Gastrocnemius medialis (tissue), 4 donors: ENCODE measurements at regions of chr4 and their contacts with region 1.

Region 1: DNA sequence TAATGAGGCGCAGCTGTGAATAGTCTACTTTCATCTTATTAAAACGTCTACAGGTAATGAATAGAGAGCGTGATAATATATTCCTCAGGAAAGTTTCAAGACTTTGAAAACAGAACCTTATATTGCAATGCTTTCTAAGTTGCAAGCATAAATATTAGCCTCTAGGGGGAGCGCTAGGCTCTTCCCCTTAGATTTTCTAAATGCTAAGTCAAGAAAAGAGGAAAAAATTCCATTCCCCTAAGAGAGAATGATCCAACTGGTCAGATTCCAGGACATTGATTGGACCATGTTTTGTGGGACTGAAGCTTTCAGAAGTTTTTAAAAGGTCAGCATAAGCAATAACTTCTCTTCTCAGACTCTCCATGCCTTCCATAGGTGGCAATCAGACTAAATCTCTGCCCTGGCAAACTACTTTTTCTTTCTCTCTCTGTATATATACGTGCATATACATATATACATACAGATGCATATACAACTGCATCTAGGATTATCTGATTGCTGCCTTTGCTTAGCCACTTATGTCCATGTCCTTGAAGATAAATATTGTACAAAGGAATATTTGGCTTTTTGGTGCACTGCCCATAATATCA is 492.9 kb downstream of the INPP4B start:
- DNase-seq: no peak
- ATAC-seq: peak; percentile 38 to 69
- H3K4me3 ChIP-seq: peak overlapping the region in 3 of 4 donors; percentile 2 to 23 (median 4)
- H3K27ac ChIP-seq: peak overlapping the region; percentile 45 to 75 (median 60)
- H3K4me1 ChIP-seq: peaks cover 36 to 65% of the 10 kb centered on the region in 2 donors
- H3K27me3 ChIP-seq: no peaks in the 10 kb centered on the region
- CTCF ChIP-seq: peak; percentile 66 to 91 (median 76)
- POLR2A ChIP-seq: no peak

Region 2: GRCh38 chr4:142405021-142405694 is 51.9 kb after region 1 on chr4:
- in situ Hi-C with region 1: no loop called
- intact Hi-C with region 1: loop called (anchors 2 kb)
- DNase-seq: peak; percentile 38 to 54
- ATAC-seq: peak; percentile 72 to 81
- H3K4me3 ChIP-seq: peak overlapping the region; percentile 57 to 61 (median 60)
- H3K27ac ChIP-seq: peak overlapping the region; percentile 82 to 91 (median 86)
- H3K4me1 ChIP-seq: peaks cover 20 to 48% of the 10 kb centered on the region in 2 donors
- H3K27me3 ChIP-seq: no peaks in the 10 kb centered on the region
- CTCF ChIP-seq: no peak
- POLR2A ChIP-seq: peak in 1 of 2 donors; percentile 56

Region 3: DNA sequence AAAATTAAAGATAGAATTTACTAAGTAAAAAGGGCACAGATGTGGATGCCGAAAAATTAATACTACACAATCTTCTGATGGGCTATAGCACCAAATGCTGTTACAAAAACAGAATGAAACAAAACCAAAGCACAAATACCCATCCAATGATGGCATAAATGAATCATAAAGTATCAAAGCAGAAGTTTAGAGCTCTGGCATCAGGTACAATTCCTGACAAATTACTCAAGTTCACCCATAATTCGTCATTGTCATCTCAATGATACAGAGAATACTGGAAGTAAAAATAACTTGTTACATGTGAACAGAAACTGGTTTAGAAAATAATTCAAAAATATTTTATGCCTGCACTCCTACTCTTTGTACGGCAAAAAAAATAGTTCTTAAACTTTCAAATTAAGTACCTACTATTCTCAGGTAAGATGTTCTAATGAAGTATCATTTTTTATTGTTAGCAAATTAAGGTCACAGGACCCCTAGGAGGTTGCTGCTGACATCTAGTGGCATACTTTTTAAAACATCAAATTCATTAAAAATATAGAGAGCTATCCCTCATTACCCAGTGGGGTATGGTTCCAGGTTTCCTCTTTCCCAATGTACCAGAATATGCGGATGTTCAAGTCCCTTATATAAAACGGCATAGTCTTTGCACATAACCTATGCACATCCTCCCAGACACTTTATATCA is 366.8 kb after region 1 on chr4:
- in situ Hi-C with region 1: loop called in 2 of 4 experiments (anchors 25 kb)
- intact Hi-C with region 1: no loop called
- DNase-seq: no peak
- ATAC-seq: no peak
- H3K4me3 ChIP-seq: no peak overlapping the region
- H3K27ac ChIP-seq: no peak overlapping the region
- H3K4me1 ChIP-seq: no peaks in the 10 kb centered on the region
- H3K27me3 ChIP-seq: no peaks in the 10 kb centered on the region
- CTCF ChIP-seq: peak in 3 of 5 experiments; percentile 30 to 51 (median 36)
- POLR2A ChIP-seq: no peak

Region 4: DNA sequence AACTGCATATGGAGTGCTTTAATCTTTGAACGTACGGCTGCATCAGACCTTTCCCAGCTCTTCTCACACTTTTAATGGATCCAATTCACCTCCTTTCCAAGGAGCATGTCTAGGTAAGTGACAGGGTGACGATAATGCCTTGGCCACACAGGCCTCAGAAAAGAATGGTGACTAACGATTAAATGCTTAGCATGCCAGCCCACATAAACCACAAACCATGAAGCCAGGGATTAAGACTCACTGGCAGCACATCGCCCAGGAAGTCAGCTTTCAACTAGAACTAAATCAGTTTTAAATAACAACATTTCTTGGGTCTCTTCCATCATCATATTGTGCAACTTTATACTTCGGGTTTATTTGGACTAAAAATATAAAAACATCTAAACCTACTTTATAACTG is 464.2 kb after region 1 on chr4:
- in situ Hi-C with region 1: no loop called
- intact Hi-C with region 1: loop called (anchors 10 kb)
- DNase-seq: peak; percentile 22 to 28
- ATAC-seq: peak; percentile 94 to 98
- H3K4me3 ChIP-seq: peak overlapping the region in 1 of 4 donors; percentile 4
- H3K27ac ChIP-seq: peak overlapping the region in 2 of 4 donors; percentile 2 to 19
- H3K4me1 ChIP-seq: peaks cover 12 to 13% of the 10 kb centered on the region in 2 donors
- H3K27me3 ChIP-seq: no peaks in the 10 kb centered on the region
- CTCF ChIP-seq: no peak
- POLR2A ChIP-seq: no peak

Region 5: DNA sequence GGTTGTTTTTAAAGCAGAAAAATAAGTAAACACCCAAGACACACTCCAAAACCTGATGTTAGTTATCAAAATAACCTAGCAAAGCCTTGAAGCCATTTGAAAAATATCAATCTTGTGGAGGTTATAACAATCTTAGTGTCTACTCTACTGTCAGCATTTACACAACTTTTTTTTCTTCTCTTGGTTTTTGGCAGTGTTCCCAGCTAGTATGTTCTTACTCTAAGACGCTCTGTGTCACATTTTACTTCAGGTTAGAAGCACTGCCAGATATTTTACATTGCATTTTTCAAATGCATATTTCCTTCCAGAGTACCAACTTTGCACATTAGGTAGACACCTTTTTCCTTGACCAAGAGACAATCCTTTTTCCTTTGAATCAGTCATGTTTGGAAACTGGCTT is 606.9 kb after region 1 on chr4:
- in situ Hi-C with region 1: no loop called
- intact Hi-C with region 1: no loop called
- DNase-seq: no peak
- ATAC-seq: peak; percentile 62 to 73
- H3K4me3 ChIP-seq: no peak overlapping the region
- H3K27ac ChIP-seq: peak overlapping the region in 3 of 4 donors; percentile 7 to 67 (median 58)
- H3K4me1 ChIP-seq: peaks cover 14 to 40% of the 10 kb centered on the region in 2 donors
- H3K27me3 ChIP-seq: no peaks in the 10 kb centered on the region
- CTCF ChIP-seq: no peak
- POLR2A ChIP-seq: no peak